Body of pancreas (tissue), 4 donors: ENCODE measurements at regions of chr17 and their contacts with region 1.

Region 1: DNA sequence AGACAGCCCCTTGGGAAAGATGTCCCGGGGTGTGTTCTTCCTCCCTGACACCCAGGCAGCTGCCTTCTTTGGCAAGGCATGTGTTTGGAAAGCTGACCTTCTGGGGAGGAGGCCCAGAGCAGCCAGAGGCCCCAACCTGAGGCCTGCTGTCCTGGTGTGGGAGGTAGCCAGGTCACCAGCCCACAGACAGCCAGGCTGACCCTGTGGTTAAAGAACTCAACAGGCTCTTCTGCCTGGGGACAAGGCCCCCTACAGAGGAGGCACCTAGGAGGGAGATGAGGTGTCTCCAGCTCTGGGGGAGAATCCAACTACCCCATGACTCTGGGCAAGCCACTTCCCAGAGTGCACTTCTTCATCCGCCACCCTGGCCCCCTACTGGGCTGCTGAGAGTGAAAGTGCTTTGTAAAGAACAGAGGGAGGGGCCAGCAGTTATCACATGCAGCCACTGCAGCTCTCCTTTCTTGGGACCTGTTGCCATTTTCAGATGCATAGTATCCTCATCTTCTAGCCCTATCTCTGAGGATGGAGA is 13.1 kb upstream of the SREBF1 start:
- DNase-seq: peak in 2 of 4 donors; percentile 41 to 52
- ATAC-seq: peak; percentile 33
- H3K4me3 ChIP-seq: no peak overlapping the region
- H3K27ac ChIP-seq: peak overlapping the region in 2 of 4 donors; percentile 9 to 36
- H3K4me1 ChIP-seq: peaks cover 14% of the 10 kb centered on the region
- H3K27me3 ChIP-seq: no peaks in the 10 kb centered on the region
- CTCF ChIP-seq: peak in 1 of 7 experiments; percentile 21
- POLR2A ChIP-seq: no peak

Region 2: DNA sequence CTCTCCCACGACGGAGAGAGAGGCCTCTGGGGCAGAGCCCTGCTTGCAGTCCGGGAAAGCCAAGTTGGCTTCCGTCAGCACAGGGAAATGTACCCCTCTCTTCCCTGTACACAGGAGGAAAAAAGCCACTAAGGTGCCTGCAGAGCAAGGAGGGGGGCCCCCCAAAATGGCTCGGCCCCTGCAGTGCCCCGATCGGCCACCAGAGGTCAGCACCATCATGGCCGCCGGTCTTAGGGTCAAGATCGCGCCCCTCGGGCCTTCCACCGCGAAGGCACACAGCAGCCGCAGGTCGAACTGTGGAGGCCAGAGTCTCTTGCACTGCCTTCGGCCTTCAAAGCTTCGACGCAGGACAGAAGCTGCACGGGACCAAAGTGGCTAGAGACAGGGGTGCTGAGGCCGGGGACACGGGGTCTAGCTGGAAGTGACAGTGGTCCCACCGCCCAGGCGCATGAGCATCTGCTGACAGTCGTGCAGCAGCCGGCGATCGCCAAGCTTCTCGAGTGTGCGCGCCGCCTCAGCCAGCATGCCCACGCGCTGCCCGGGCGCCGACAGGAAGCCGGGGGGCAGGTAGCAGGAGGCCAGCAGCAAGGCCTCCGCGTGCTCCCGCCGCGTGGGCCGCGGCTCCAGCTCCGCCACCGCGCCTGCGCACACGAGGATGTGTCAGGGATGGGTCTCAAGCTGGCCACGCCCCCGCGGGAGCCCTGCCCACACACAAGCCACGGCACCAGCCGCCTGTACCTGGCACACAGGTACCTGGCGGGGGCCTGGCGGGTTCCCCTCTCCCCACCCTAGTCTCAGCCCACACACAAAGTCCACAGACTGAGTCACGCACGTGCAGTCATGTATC is 37.5 kb before region 1 on chr17:
- intact Hi-C with region 1: loop called (anchors 5 kb)
- DNase-seq: peak; percentile 65 to 81 (median 76)
- ATAC-seq: peak; percentile 79
- H3K4me3 ChIP-seq: no peak overlapping the region
- H3K27ac ChIP-seq: peak overlapping the region in 3 of 4 donors; percentile 19 to 48 (median 26)
- H3K4me1 ChIP-seq: peaks cover 15% of the 10 kb centered on the region
- H3K27me3 ChIP-seq: no peaks in the 10 kb centered on the region
- CTCF ChIP-seq: peak; percentile 96 to 100 (median 99)
- POLR2A ChIP-seq: no peak